GM10248 (cell line): ENCODE measurements at regions of chr20 and their contacts with region 1.

Region 1: DNA sequence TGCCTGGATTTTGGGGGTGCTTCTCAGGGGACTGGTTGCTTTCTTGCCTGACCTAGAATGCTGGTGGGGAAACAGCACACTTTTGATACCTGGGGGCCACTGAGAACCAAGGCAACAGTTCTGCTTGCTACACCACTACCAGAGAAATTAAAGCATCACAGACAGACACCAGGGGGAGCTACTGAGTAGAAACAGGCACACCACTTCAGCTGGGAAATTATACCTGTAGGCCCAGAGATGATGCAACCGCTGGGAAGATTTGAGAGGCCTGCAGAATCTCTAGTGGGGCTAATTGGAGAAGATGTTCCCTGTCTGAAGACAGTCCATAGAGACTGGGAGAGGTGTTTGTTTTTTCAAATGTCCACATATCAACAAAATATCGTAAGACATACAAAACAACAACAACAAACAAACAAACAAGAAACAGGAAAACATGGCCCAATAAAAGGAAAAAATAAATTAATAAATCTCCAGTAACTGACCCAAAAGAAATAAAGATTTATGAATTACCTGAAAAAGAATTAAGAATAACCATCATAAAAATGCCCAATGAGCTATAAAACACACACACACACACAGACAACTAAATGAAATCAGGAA is 129.4 kb upstream of the RIN2 start:
- DNase-seq: peak; percentile 69
- CTCF ChIP-seq: peak; percentile 77

Region 2: GRCh38 chr20:19644085-19644484 is 15.4 kb after region 1 on chr20:
- CTCF ChIA-PET with region 1: interaction called, 23 read pairs
- POLR2A ChIA-PET with region 1: no interaction called
- DNase-seq: no peak
- CTCF ChIP-seq: no peak

Region 3: DNA sequence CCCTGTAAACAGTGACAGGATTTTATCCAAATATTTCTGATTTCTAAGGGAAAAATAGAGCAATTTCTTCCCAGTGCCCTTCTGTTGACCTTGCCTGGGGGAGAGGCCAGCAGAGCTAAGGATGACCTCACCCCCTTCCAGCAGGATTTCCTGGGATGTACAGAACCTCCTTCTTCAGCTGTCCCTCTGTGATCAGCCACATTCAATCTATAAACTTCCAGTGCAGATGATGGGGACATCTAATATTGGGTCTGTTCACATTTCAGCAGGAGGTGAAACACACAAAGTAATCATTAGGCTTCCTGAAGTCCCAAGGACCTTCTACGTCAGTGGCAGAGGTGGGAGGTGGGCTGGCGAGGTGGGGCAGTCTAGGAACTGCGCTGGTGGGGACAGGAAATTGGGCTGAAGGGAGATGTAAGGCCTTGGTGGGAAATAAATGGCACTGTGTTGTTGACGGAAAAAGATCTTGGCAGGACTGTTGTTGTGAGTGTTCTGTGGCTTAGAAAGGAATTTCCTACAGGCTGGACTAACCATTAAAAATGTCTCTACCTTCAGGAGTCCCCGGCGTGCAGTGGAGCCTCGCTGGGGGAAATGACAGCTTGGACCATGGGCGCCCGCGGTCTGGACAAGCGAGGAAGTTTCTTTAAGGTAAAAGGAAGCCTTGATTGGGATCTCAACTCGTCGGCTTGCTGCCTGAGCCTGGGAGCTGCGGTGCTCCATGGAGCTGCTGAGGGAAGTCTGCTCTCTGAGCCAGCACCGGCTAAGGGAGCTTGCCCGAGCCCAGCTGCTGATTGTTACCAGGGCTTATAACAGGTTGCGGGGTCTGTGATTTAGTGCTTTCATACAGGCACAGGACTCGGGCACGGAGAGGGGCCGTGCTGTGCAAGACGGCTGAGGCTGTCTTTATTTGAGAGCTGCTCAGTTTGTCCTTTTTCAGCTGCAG is 260.6 kb after region 1 on chr20:
- CTCF ChIA-PET with region 1: no interaction called
- POLR2A ChIA-PET with region 1: no interaction called
- DNase-seq: no peak
- CTCF ChIP-seq: no peak

Region 4: GRCh38 chr20:19974626-19975435 is 346.2 kb after region 1 on chr20:
- CTCF ChIA-PET with region 1: no interaction called
- POLR2A ChIA-PET with region 1: no interaction called
- DNase-seq: no peak
- CTCF ChIP-seq: no peak